CD8-positive, alpha-beta memory T cell (primary cell): ENCODE measurements at regions of chr7 and their contacts with region 1.

Region 1: GRCh38 chr7:26853788-26854393 is 10.5 kb downstream of the SKAP2 start:
- DNase-seq: no peak
- H3K4me3 ChIP-seq: no peak overlapping the region
- H3K4me3 Mint-ChIP-seq: no peak overlapping the region
- H3K27ac ChIP-seq: no peak overlapping the region
- H3K27ac Mint-ChIP-seq: no peak overlapping the region
- H3K4me1 ChIP-seq: peaks cover 5% of the 10 kb centered on the region
- H3K4me1 Mint-ChIP-seq: peaks cover 8 to 18% (median 11%) of the 10 kb centered on the region in 3 donors
- H3K27me3 ChIP-seq: peaks cover 4% of the 10 kb centered on the region
- H3K27me3 Mint-ChIP-seq: peaks cover 12 to 28% of the 10 kb centered on the region in 2 donors

Region 2: DNA sequence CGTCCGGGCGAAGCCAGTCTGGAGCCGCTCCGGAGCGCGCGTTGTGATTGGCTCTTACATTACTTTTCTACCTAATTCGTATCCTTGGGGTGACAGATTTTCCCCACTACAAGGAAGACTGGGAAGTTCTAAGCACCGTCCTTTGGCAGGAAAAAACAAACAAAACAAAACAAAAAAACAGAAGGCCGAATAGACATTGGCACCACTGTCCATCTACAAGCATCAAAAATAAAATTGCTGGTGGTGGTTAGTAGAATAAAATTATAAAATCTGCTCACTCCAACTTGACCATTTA is 11.2 kb after region 1 on chr7:
- CTCF ChIA-PET with region 1: interaction called, 3 read pairs
- POLR2A ChIA-PET with region 1: interaction called, 11 read pairs
- DNase-seq: no peak
- H3K4me3 ChIP-seq: peak overlapping the region; percentile 79
- H3K4me3 Mint-ChIP-seq: peak overlapping the region; percentile 83 to 97 (median 93)
- H3K27ac ChIP-seq: peak overlapping the region; percentile 75
- H3K27ac Mint-ChIP-seq: peak overlapping the region; percentile 79 to 98 (median 89)
- H3K4me1 ChIP-seq: peaks cover 11% of the 10 kb centered on the region
- H3K4me1 Mint-ChIP-seq: peaks cover 24 to 30% (median 29%) of the 10 kb centered on the region in 3 donors
- H3K27me3 ChIP-seq: no peaks in the 10 kb centered on the region
- H3K27me3 Mint-ChIP-seq: peaks cover 7 to 24% of the 10 kb centered on the region in 2 donors